ENCODE measurements at regions of chr5 and their contacts with region 1.

Region 1: GRCh38 chr5:134758504-134759341 is at the start of gene DDX46:
- DNase-seq: peak; percentile 92 to 93 (median 92)
- H3K4me3 ChIP-seq: peak within 1 kb of the TSS; percentile 82 to 84
- H3K4me3 Mint-ChIP-seq: peak within 1 kb of the TSS; percentile 99 to 100 (median 100)
- H3K27ac ChIP-seq: peak within 1 kb of the TSS; percentile 83
- H3K27ac Mint-ChIP-seq: peak within 1 kb of the TSS; percentile 86 to 99 (median 98)
- H3K4me1 ChIP-seq: peaks cover 25% of the 10 kb centered on the region
- H3K4me1 Mint-ChIP-seq: peaks cover 28 to 44% (median 38%) of the 10 kb centered on the region in 4 donors
- H3K27me3 ChIP-seq: no peaks in the 10 kb centered on the region
- H3K27me3 Mint-ChIP-seq: no peaks in the 10 kb centered on the region
- total RNA-seq, gene DDX46: 59.9 to 66.8 TPM

Region 2: DNA sequence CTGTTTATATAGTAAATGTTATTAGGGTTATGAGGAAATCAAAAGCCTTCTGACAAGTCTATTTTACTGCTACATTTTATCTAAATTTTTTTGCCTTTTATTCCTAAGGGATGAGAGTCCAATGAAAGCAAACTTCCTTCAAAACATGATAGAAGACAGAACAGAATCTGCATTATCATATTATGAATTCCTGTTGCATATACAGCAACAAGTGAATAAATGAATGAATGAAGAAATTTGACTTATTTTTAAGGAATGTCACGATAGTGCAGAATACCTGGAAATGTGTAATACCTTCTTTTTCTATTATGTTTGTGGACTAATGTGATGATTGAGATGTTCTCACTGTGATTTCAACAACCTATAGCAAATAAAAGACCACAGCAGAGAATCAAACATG is 33.9 kb before region 1 on chr5:
- CTCF ChIA-PET with region 1: no interaction called
- POLR2A ChIA-PET with region 1: no interaction called
- intact Hi-C with region 1: no loop called
- DNase-seq: no peak
- H3K4me3 ChIP-seq: no peak overlapping the region
- H3K4me3 Mint-ChIP-seq: no peak overlapping the region
- H3K27ac ChIP-seq: no peak overlapping the region
- H3K27ac Mint-ChIP-seq: no peak overlapping the region
- H3K4me1 ChIP-seq: no peaks in the 10 kb centered on the region
- H3K4me1 Mint-ChIP-seq: no peaks in the 10 kb centered on the region
- H3K27me3 ChIP-seq: no peaks in the 10 kb centered on the region
- H3K27me3 Mint-ChIP-seq: no peaks in the 10 kb centered on the region

Region 3: GRCh38 chr5:134845852-134846640 is 87.3 kb after region 1 on chr5 and contains the start of gene C5orf24:
- CTCF ChIA-PET with region 1: interaction called, 5 read pairs
- POLR2A ChIA-PET with region 1: interaction called, 11 read pairs
- intact Hi-C with region 1: loop called (anchors 5 kb)
- DNase-seq: peak; percentile 90 to 93 (median 92)
- H3K4me3 ChIP-seq: peak within 1 kb of the TSS; percentile 59 to 92
- H3K4me3 Mint-ChIP-seq: peak within 1 kb of the TSS; percentile 87 to 96 (median 92)
- H3K27ac ChIP-seq: peak within 1 kb of the TSS; percentile 94
- H3K27ac Mint-ChIP-seq: peak within 1 kb of the TSS; percentile 93 to 99 (median 97)
- H3K4me1 ChIP-seq: peaks cover 29% of the 10 kb centered on the region
- H3K4me1 Mint-ChIP-seq: peaks cover 16 to 42% (median 29%) of the 10 kb centered on the region in 4 donors
- H3K27me3 ChIP-seq: no peaks in the 10 kb centered on the region
- H3K27me3 Mint-ChIP-seq: no peaks in the 10 kb centered on the region
- total RNA-seq, gene C5orf24: 33.4 to 33.9 TPM

Measured in CD4-positive, alpha-beta memory T cell (primary cell).